ENCODE measurements at regions of chr3 and their contacts with region 1.

Region 1: GRCh38 chr3:142645236-142645793 is 49.1 kb downstream of the PLS1 start:
- DNase-seq: no peak
- H3K4me3 ChIP-seq: no peak overlapping the region
- H3K27ac ChIP-seq: peak overlapping the region; percentile 61
- H3K4me1 ChIP-seq: no peaks in the 10 kb centered on the region
- H3K27me3 ChIP-seq: no peaks in the 10 kb centered on the region
- CTCF ChIP-seq: no peak

Region 2: GRCh38 chr3:142626971-142627370 is 18.3 kb before region 1 on chr3:
- intact Hi-C with region 1: loop called (anchors 2 kb)
- DNase-seq: no peak
- H3K4me3 ChIP-seq: no peak overlapping the region
- H3K27ac ChIP-seq: no peak overlapping the region
- H3K4me1 ChIP-seq: no peaks in the 10 kb centered on the region
- H3K27me3 ChIP-seq: no peaks in the 10 kb centered on the region
- CTCF ChIP-seq: no peak

Region 3: DNA sequence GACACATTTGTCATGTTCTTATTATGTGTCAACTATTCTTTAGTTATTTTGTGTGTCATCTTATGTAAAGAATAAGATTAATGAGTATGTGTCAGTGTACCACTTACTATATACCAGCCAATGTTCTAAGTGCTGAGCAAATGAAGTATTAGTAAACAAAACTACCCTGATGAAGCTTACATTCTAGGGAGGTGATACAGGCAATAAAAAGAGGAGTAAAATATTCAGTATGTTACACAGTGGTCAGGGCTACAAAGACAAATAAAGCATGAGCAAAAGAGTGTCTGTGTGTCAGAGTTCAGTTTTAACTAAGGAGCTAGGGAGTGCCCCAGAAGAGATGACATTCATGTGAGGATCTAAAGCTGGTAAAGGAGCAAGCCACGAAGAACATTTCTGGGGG is 157.6 kb after region 1 on chr3:
- intact Hi-C with region 1: no loop called
- DNase-seq: no peak
- H3K4me3 ChIP-seq: no peak overlapping the region
- H3K27ac ChIP-seq: no peak overlapping the region
- H3K4me1 ChIP-seq: no peaks in the 10 kb centered on the region
- H3K27me3 ChIP-seq: no peaks in the 10 kb centered on the region
- CTCF ChIP-seq: no peak

Region 4: DNA sequence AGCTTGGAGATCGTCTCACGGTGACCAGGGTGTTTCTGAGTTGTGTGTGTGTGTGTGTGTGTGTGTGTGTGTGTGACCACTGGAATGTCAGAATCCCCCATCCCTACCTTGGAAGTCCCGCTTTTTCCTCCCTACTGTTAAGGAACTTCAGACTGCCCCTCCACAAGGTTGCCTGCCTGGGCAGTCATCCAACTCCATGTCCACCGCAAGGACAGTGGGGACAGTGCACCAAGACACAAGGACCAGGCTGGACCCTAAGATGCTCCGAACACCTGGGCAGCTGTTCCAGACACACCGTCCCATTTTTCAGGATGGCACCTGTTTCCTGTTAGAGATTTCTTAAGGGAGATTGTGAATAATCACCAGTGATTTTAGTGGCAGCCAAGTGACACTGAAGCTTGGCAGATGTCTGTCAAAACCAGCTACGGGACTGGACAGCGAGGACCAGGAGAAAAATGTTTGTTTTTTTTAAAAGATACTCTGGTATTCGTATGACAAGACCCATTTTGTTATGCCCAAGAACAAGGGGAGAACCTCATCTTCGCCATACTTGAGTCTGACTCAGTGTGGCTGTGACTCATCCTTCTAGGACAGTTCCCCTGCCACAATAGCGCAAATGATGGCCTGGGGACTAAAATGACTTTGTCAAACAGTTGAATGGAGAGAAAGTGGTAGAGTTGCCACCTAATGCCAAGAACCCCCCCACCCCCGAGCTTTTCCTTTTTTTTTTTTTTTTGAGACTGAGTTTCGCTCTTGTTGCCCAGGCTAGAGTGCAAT is 302.7 kb after region 1 on chr3:
- intact Hi-C with region 1: no loop called
- DNase-seq: no peak
- H3K4me3 ChIP-seq: no peak overlapping the region
- H3K27ac ChIP-seq: no peak overlapping the region
- H3K4me1 ChIP-seq: no peaks in the 10 kb centered on the region
- H3K27me3 ChIP-seq: peaks cover 5% of the 10 kb centered on the region
- CTCF ChIP-seq: no peak

Measured in colonic mucosa (tissue), 4 donors.